MCF 10A (cell line): ENCODE measurements at regions of chrX and their contacts with region 1.

Region 1: GRCh38 chrX:128769495-128769894 is 717.3 kb upstream of the ACTRT1 start:
- DNase-seq: no peak
- H3K4me3 Mint-ChIP-seq: no peak overlapping the region
- H3K27ac Mint-ChIP-seq: no peak overlapping the region
- H3K4me1 Mint-ChIP-seq: no peaks in the 10 kb centered on the region
- H3K27me3 Mint-ChIP-seq: no peaks in the 10 kb centered on the region
- CTCF ChIP-seq: no peak

Region 2: DNA sequence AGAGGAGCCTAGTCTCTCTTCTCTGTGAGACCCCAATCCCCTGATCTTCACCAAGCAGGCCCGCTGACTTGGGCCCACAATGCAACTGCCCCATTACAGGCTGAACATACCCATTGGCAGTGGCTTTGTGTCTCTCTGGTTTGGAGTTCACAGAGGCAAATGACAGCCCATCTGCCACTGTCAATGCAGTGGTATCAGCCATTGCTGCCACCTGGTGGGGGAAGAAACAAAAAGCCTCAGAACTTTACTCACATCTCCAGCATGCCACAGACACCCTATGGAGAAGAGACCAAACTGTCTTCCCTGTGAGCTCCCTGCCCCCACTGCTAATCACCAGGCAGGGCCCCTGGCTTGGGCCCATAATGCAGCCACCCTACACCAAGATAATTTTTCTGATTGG is 12.0 kb after region 1 on chrX:
- CTCF ChIA-PET with region 1: interaction called, 11 read pairs
- POLR2A ChIA-PET with region 1: interaction called, 3 read pairs
- intact Hi-C with region 1: no loop called
- DNase-seq: peak; percentile 47
- H3K4me3 Mint-ChIP-seq: no peak overlapping the region
- H3K27ac Mint-ChIP-seq: no peak overlapping the region
- H3K4me1 Mint-ChIP-seq: peaks cover 8% of the 10 kb centered on the region
- H3K27me3 Mint-ChIP-seq: no peaks in the 10 kb centered on the region
- CTCF ChIP-seq: peak; percentile 19

Region 3: GRCh38 chrX:129065895-129066294 is 296.4 kb after region 1 on chrX:
- CTCF ChIA-PET with region 1: no interaction called
- POLR2A ChIA-PET with region 1: no interaction called
- intact Hi-C with region 1: no loop called
- DNase-seq: no peak
- H3K4me3 Mint-ChIP-seq: no peak overlapping the region
- H3K27ac Mint-ChIP-seq: no peak overlapping the region
- H3K4me1 Mint-ChIP-seq: no peaks in the 10 kb centered on the region
- H3K27me3 Mint-ChIP-seq: no peaks in the 10 kb centered on the region
- CTCF ChIP-seq: no peak

Region 4: GRCh38 chrX:130482871-130483270 is 1713.4 kb after region 1 on chrX:
- CTCF ChIA-PET with region 1: no interaction called
- POLR2A ChIA-PET with region 1: no interaction called
- intact Hi-C with region 1: no loop called
- DNase-seq: no peak
- H3K4me3 Mint-ChIP-seq: no peak overlapping the region
- H3K27ac Mint-ChIP-seq: no peak overlapping the region
- H3K4me1 Mint-ChIP-seq: no peaks in the 10 kb centered on the region
- H3K27me3 Mint-ChIP-seq: peaks cover 62% of the 10 kb centered on the region
- CTCF ChIP-seq: no peak